ENCODE measurements at regions of chr7 and their contacts with region 1.

Region 1: DNA sequence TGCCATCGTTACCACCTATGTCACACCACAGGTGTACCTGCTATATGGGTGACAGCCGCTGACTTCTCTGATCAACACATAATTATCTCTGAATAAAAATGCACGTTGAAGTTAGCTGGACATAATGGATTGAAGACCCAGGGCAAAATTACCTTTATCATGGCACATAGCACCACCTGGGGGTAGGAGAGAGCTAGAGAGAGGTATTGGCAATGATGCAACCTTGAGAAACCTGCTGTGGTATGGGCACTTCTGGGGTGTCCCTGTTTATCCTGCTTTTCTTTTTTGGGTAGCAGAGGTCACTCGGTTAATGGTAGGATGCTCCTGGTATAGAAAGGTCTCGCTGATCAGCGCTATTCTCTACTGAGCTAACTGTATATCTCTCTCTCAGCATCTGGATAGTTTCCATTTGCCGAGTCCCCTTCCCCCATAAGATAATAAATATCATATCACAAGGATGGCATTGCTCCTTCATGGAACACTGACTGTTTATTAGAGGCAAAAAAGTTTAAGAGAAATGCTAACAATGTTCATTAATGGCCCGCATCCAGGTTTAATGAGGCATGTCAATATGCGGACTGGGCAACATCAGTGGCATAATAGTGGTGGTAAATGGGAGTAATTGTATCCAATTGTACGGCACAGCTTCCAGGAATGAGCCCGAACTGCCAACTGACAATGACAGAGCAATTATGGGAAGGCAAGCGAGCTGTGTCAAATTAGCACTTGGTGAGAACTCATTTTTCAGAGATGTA is 323.1 kb downstream of the TFEC start:
- DNase-seq: no peak

Region 2: GRCh38 chr7:115748131-115748738 is 40.8 kb after region 1 on chr7:
- intact Hi-C with region 1: loop called in 1 of 2 experiments (anchors 2 kb)
- DNase-seq: no peak

Region 3: DNA sequence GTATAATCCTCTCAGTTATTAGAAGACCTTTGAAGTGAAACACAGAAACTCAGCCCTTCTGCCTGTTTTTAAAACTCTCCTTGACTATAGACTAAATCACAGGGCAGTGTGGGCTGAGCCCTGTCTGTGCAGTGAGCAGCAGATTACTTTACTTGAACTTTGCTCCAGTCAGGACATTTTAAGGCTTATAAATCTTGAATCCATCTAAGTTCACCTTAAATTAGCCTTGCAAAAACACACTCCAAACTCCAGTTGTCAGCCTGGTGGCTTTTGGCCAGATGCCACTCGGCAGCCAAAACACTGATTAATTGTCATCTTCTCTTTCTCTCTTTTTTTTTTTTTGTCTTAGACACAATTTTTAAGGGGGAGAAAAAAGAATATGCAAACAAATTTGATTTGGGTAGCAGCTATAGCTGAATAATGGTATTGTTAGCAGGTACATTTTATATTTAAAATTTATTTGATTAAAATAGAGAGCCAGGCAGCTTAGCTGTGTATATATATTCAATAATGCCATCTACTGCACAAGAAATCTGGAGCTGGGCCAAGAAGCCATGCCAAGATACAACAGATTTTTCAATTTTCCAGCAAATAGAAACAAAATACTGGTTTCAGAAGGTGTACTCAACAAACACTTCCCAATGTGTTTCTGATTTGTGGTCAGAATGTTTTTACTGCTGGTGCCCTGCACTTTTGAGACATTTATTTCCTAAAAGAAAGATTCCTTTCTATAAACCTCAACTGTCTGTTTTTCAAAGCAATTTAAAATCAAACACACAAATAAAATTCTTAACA is 75.5 kb after region 1 on chr7:
- intact Hi-C with region 1: no loop called
- DNase-seq: no peak

Measured in posterior vena cava (tissue), 2 donors.